Dorsolateral prefrontal cortex (tissue), 120 donors: ENCODE measurements at regions of chr15 and their contacts with region 1.

Region 1: GRCh38 chr15:40044717-40045571 is 6.0 kb upstream of the SRP14 start:
- DNase-seq: peak; percentile 77 to 86 (median 82)
- H3K4me3 ChIP-seq: peak overlapping the region in 45 of 59 donors; percentile 3 to 56 (median 31)
- H3K27ac ChIP-seq: peak overlapping the region in 10 of 59 donors; percentile 4 to 61 (median 26)
- H3K27me3 ChIP-seq: no peaks in the 10 kb centered on the region
- CTCF ChIP-seq: peak; percentile 42 to 98 (median 88)

Region 2: DNA sequence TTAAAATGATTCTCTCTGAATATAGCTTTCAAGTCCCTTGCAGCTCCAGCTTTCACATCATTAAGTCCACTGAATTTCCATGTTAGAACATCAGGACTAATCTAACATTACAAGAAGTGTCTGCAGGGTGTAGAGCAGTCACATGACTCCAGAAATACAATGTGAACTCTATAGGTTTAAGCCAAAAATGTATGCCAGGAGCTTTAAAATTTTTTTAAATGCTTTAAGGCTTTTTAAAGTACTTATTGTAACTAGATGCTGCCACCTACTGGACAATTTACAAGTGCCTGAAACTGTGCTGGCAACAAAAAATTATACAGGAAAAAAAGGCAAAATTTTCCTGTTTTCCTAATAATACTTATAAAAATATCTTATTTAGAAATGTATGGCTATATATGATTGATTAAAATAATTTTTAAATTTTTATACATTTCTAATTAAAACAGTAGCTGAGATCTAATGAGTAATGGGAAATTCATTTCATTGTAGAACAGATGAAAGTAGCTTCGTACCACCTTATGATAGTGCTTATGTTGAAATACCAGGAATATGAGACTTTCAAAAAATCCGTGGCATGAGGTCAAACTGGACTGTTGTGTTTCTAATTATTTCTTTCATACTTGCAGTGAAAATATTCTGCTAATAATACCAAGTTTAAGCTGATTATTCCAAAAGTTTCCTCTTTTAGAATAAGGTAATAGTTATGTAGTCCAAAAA is 288.0 kb before region 1 on chr15:
- intact Hi-C with region 1: no loop called
- DNase-seq: no peak
- H3K4me3 ChIP-seq: no peak overlapping the region
- H3K27ac ChIP-seq: no peak overlapping the region
- H3K27me3 ChIP-seq: no peaks in the 10 kb centered on the region
- CTCF ChIP-seq: peak; percentile 78 to 97 (median 90)

Region 3: GRCh38 chr15:39782441-39783138 is 262.4 kb before region 1 on chr15 and contains the start of gene FSIP1:
- intact Hi-C with region 1: loop called in 1 of 2 experiments (anchors 10 kb)
- DNase-seq: peak; percentile 92 to 97 (median 94)
- H3K4me3 ChIP-seq: peak within 1 kb of the TSS; percentile 59 to 95 (median 81)
- H3K27ac ChIP-seq: peak within 1 kb of the TSS; percentile 3 to 94 (median 85)
- H3K27me3 ChIP-seq: no peaks in the 10 kb centered on the region
- CTCF ChIP-seq: peak in 23 of 56 donors; percentile 1 to 50 (median 16)
- total RNA-seq, gene FSIP1: 3.4 to 15.4 (median 8.8) TPM

Region 4: DNA sequence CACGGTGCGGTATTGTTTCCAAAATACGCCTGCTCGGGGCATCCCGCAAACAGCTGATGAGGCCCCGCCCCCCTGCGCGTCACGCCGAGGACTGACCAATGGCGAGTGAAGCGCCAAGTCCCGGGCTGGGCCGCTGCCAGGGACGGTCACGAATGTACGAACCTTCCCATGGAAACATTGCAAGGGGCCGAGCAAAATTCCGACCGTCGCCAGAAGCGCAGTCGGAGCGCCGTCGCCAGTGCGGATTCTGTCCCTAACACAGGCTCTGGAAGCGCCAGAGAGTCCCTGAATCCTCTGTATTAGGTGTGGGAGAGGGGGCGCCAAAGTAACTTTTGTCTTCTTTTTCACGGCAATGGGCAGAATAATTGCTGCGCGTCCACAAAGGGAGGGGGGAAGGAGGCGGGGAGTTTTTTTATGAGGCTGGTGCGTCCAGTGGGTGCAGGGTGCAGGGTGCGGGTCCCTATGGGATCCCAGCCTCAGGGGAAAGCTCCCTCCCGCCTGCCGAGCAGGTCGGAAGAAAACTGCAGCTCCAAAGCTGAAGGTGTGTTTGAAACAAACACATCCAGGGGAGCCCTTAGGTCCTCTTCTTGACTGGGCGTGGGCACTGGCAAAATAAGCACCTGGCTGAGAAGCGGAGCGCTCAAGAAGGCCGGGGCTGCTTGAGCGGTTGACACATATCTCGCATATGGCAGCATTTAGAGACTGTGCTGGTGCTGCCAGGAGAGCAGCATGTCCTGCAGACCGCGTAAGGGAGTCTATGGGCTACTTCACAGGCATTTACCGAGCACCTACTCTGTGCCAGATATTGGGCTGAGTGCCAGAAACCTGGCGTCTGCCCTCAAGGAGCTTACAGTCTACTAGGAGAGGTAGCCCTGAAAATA is 64.2 kb after region 1 on chr15 and contains the start of gene BMF:
- intact Hi-C with region 1: loop called in 1 of 2 experiments (anchors 2 kb)
- DNase-seq: peak; percentile 96 to 99 (median 98)
- H3K4me3 ChIP-seq: peak within 1 kb of the TSS; percentile 35 to 91 (median 71)
- H3K27ac ChIP-seq: peak within 1 kb of the TSS in 36 of 59 donors; percentile 10 to 79 (median 56)
- H3K27me3 ChIP-seq: no peaks in the 10 kb centered on the region
- CTCF ChIP-seq: peak in 49 of 56 donors; percentile 14 to 64 (median 44)
- total RNA-seq, gene BMF: 0.89 to 7.2 (median 2.6) TPM

Region 5: GRCh38 chr15:40150163-40150925 is 105.4 kb after region 1 on chr15:
- intact Hi-C with region 1: loop called in 1 of 2 experiments (anchors 10 kb)
- DNase-seq: peak in 5 of 10 donors; percentile 32 to 73 (median 60)
- H3K4me3 ChIP-seq: no peak overlapping the region
- H3K27ac ChIP-seq: no peak overlapping the region
- H3K27me3 ChIP-seq: no peaks in the 10 kb centered on the region
- CTCF ChIP-seq: no peak

Region 6: GRCh38 chr15:40160689-40161688 is 116.0 kb after region 1 on chr15 and contains the start of gene BUB1B:
- intact Hi-C with region 1: loop called (anchors 2 to 10 kb)
- DNase-seq: peak; percentile 78 to 95 (median 92)
- H3K4me3 ChIP-seq: peak within 1 kb of the TSS; percentile 23 to 80 (median 61)
- H3K27ac ChIP-seq: peak within 1 kb of the TSS in 5 of 59 donors; percentile 3 to 59 (median 14)
- H3K27me3 ChIP-seq: no peaks in the 10 kb centered on the region
- CTCF ChIP-seq: peak in 27 of 56 donors; percentile 6 to 60 (median 27)
- total RNA-seq, gene BUB1B: 0.13 to 8.5 (median 1.8) TPM in 113 of 120 experiments, not detected in the others

Region 7: GRCh38 chr15:40217159-40217824 is 172.3 kb after region 1 on chr15:
- intact Hi-C with region 1: loop called in 1 of 2 experiments (anchors 5 kb)
- DNase-seq: peak in 3 of 10 donors; percentile 19 to 57 (median 34)
- H3K4me3 ChIP-seq: peak overlapping the region in 27 of 59 donors; percentile 2 to 40 (median 18)
- H3K27ac ChIP-seq: peak overlapping the region in 16 of 59 donors; percentile 4 to 68 (median 44)
- H3K27me3 ChIP-seq: peaks cover 0 to 5% (median 0%) of the 10 kb centered on the region in 45 donors
- CTCF ChIP-seq: peak; percentile 80 to 98 (median 88)

Region 8: GRCh38 chr15:40440743-40441564 is 396.0 kb after region 1 on chr15 and contains the start of gene BAHD1:
- intact Hi-C with region 1: loop called in 1 of 2 experiments (anchors 10 kb)
- DNase-seq: peak; percentile 95 to 100 (median 98)
- H3K4me3 ChIP-seq: peak within 1 kb of the TSS; percentile 52 to 94 (median 83)
- H3K27ac ChIP-seq: peak within 1 kb of the TSS in 43 of 59 donors; percentile 5 to 90 (median 66)
- H3K27me3 ChIP-seq: peaks cover 0 to 10% (median 0%) of the 10 kb centered on the region in 45 donors
- CTCF ChIP-seq: peak in 33 of 56 donors; percentile 9 to 56 (median 32)
- total RNA-seq, gene BAHD1: 16.2 to 33.8 (median 21.3) TPM